CD8-positive, alpha-beta T cell (primary cell): ENCODE measurements at regions of chr16 and their contacts with region 1.

Region 1: GRCh38 chr16:27461483-27462171 is 59.7 kb downstream of the IL21R start:
- DNase-seq: no peak
- ATAC-seq: no peak
- H3K4me3 ChIP-seq: no peak overlapping the region
- H3K4me3 Mint-ChIP-seq: peak overlapping the region; percentile 32
- H3K27ac ChIP-seq: no peak overlapping the region
- H3K27ac Mint-ChIP-seq: peak overlapping the region; percentile 69
- H3K4me1 ChIP-seq: peaks cover 76% of the 10 kb centered on the region
- H3K4me1 Mint-ChIP-seq: peaks cover 79% of the 10 kb centered on the region
- H3K27me3 ChIP-seq: no peaks in the 10 kb centered on the region
- H3K27me3 Mint-ChIP-seq: no peaks in the 10 kb centered on the region
- CTCF ChIP-seq: no peak

Region 2: GRCh38 chr16:27154705-27155521 is 306.7 kb before region 1 on chr16:
- CTCF ChIA-PET with region 1: interaction called, 5 read pairs
- POLR2A ChIA-PET with region 1: no interaction called
- intact Hi-C with region 1: loop called (anchors 1 kb)
- DNase-seq: peak; percentile 39 to 83 (median 71)
- ATAC-seq: peak; percentile 94
- H3K4me3 ChIP-seq: no peak overlapping the region
- H3K4me3 Mint-ChIP-seq: no peak overlapping the region
- H3K27ac ChIP-seq: no peak overlapping the region
- H3K27ac Mint-ChIP-seq: no peak overlapping the region
- H3K4me1 ChIP-seq: peaks cover 9% of the 10 kb centered on the region
- H3K4me1 Mint-ChIP-seq: peaks cover 8% of the 10 kb centered on the region
- H3K27me3 ChIP-seq: no peaks in the 10 kb centered on the region
- H3K27me3 Mint-ChIP-seq: no peaks in the 10 kb centered on the region
- CTCF ChIP-seq: peak; percentile 99

Region 3: GRCh38 chr16:27426423-27427408 is 34.9 kb before region 1 on chr16:
- CTCF ChIA-PET with region 1: interaction called, 3 read pairs
- POLR2A ChIA-PET with region 1: no interaction called
- intact Hi-C with region 1: loop called in 1 of 2 experiments (anchors 2 kb)
- DNase-seq: peak in 8 of 9 experiments; percentile 67 to 89 (median 81)
- ATAC-seq: peak; percentile 87
- H3K4me3 ChIP-seq: no peak overlapping the region
- H3K4me3 Mint-ChIP-seq: no peak overlapping the region
- H3K27ac ChIP-seq: peak overlapping the region in 1 of 2 experiments; percentile 69
- H3K27ac Mint-ChIP-seq: peak overlapping the region; percentile 69
- H3K4me1 ChIP-seq: peaks cover 22% of the 10 kb centered on the region
- H3K4me1 Mint-ChIP-seq: peaks cover 57% of the 10 kb centered on the region
- H3K27me3 ChIP-seq: no peaks in the 10 kb centered on the region
- H3K27me3 Mint-ChIP-seq: no peaks in the 10 kb centered on the region
- CTCF ChIP-seq: no peak

Region 4: GRCh38 chr16:27449434-27450195 is 12.0 kb before region 1 on chr16:
- CTCF ChIA-PET with region 1: interaction called, 9 read pairs
- POLR2A ChIA-PET with region 1: interaction called, 32 read pairs
- intact Hi-C with region 1: loop called (anchors 1 kb)
- DNase-seq: peak; percentile 63 to 97 (median 80)
- ATAC-seq: peak; percentile 60
- H3K4me3 ChIP-seq: peak overlapping the region; percentile 17 to 26
- H3K4me3 Mint-ChIP-seq: peak overlapping the region; percentile 70
- H3K27ac ChIP-seq: peak overlapping the region; percentile 60 to 91
- H3K27ac Mint-ChIP-seq: peak overlapping the region; percentile 99
- H3K4me1 ChIP-seq: peaks cover 68% of the 10 kb centered on the region
- H3K4me1 Mint-ChIP-seq: peaks cover 87% of the 10 kb centered on the region
- H3K27me3 ChIP-seq: no peaks in the 10 kb centered on the region
- H3K27me3 Mint-ChIP-seq: no peaks in the 10 kb centered on the region
- CTCF ChIP-seq: no peak

Region 5: GRCh38 chr16:27549859-27550581 is 88.4 kb after region 1 on chr16 and contains the starts of genes GTF3C1 and KATNIP:
- CTCF ChIA-PET with region 1: no interaction called
- POLR2A ChIA-PET with region 1: interaction called, 16 read pairs
- intact Hi-C with region 1: loop called in 1 of 2 experiments (anchors 5 kb)
- DNase-seq: peak; percentile 99 to 100 (median 100)
- ATAC-seq: peak; percentile 100
- H3K4me3 ChIP-seq: peak within 1 kb of the TSS; percentile 97
- H3K4me3 Mint-ChIP-seq: peak within 1 kb of the TSS; percentile 92
- H3K27ac ChIP-seq: peak within 1 kb of the TSS; percentile 91 to 94
- H3K27ac Mint-ChIP-seq: peak within 1 kb of the TSS; percentile 94
- H3K4me1 ChIP-seq: peaks cover 29% of the 10 kb centered on the region
- H3K4me1 Mint-ChIP-seq: peaks cover 46% of the 10 kb centered on the region
- H3K27me3 ChIP-seq: no peaks in the 10 kb centered on the region
- H3K27me3 Mint-ChIP-seq: no peaks in the 10 kb centered on the region
- CTCF ChIP-seq: no peak
- total RNA-seq, gene GTF3C1: 110 to 114 TPM
- total RNA-seq, gene KATNIP: 16.0 to 18.9 TPM

Region 6: DNA sequence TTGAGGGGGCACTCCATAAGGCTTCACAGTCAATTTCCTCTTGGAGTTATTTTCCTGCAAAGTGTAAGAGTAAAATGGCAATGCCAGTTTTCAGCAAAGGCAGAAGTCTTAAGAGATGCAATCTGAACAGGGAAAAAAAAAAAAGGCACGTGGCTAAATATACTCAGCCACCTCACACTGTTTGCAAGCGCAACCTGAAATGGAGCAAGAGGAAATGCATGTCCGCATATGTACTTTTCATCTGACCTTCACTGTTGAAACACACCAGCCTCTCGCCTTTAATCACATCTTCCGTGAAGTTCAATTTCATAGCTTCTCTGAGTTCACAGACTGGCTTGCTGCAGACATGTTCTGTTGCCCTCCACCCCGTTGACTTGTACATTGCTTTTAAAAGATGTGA is 189.7 kb after region 1 on chr16:
- CTCF ChIA-PET with region 1: no interaction called
- POLR2A ChIA-PET with region 1: no interaction called
- intact Hi-C with region 1: no loop called
- DNase-seq: no peak
- ATAC-seq: no peak
- H3K4me3 ChIP-seq: no peak overlapping the region
- H3K4me3 Mint-ChIP-seq: no peak overlapping the region
- H3K27ac ChIP-seq: no peak overlapping the region
- H3K27ac Mint-ChIP-seq: no peak overlapping the region
- H3K4me1 ChIP-seq: no peaks in the 10 kb centered on the region
- H3K4me1 Mint-ChIP-seq: no peaks in the 10 kb centered on the region
- H3K27me3 ChIP-seq: no peaks in the 10 kb centered on the region
- H3K27me3 Mint-ChIP-seq: no peaks in the 10 kb centered on the region
- CTCF ChIP-seq: no peak